Cardiac septum (tissue), 1 donor: ENCODE measurements at regions of chr3 and their contacts with region 1.

Region 1: GRCh38 chr3:115160295-115160694 is 13.2 kb upstream of the ZBTB20 start:
- DNase-seq: no peak

Region 2: DNA sequence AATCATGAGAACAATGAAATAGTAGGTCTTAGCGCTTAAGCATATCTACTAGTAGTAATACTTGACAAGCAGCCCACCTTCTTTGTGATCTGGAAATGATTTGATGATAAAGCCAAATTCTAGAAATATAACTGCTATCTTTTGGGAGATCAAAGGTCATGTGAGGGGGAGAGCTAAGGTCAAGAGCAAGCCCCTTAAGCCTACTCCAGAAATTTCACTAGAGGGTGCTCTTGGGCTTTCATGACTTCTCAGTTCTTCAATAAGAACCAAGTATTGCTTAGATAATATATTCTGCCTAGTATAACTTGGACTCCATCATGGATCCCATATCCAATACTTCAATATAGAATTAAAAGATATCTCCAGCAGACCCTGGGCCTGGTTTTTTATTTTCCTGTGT is 332.8 kb before region 1 on chr3:
- intact Hi-C with region 1: loop called (anchors 5 kb)
- DNase-seq: no peak

Region 3: DNA sequence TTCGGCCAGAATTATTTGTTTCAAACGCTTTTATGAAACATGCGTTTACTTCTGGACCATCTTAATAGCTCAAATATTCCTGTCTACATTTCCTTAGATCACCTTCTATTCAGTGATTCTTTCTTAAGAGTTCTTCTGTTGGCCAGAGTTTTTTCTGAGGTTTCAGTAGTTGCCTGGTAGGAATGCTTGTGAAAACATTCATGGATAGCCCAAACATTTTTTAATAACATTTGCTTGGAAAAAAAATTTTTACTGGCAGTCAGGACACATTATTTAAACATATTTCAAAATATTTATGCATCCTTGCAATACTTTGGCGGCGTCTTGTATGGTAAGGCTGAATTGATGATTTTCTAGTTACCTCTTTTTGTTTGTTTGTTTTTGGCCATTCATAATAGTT is 34.2 kb after region 1 on chr3:
- intact Hi-C with region 1: no loop called
- DNase-seq: no peak